Heart left ventricle (tissue), 16 donors: ENCODE measurements at regions of chr15 and their contacts with region 1.

Region 1: DNA sequence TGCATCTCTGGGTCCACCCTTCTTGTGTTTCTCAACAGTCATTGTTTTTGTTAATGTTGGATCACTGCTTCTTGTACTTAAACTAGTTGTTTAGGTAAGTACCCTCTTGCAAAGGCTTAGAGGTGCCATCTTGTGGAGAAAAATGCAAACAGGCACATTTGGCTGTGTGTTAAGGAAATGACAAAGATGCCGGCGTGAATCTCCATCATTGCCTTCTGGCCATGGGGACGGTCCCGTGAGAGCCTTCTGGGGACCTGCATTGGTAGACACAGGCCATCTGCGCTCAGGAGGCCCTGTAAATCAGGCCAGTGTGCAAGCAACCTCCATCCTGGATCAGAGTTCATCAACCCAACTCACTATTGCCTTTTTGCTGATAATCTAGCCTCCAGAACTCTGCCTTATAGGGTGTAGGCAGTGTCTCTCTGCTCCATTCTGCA is 158.6 kb upstream of the NR2E3 start:
- DNase-seq: no peak
- ATAC-seq: peak in 1 of 4 donors; percentile 47
- H3K4me3 ChIP-seq: no peak overlapping the region
- H3K27ac ChIP-seq: peak overlapping the region in 1 of 12 donors; percentile 10
- H3K4me1 ChIP-seq: peaks cover 0 to 47% (median 13%) of the 10 kb centered on the region in 12 donors
- H3K27me3 ChIP-seq: no peaks in the 10 kb centered on the region
- CTCF ChIP-seq: peak in 10 of 12 donors; percentile 24 to 54 (median 41)
- POLR2A ChIP-seq: no peak

Region 2: DNA sequence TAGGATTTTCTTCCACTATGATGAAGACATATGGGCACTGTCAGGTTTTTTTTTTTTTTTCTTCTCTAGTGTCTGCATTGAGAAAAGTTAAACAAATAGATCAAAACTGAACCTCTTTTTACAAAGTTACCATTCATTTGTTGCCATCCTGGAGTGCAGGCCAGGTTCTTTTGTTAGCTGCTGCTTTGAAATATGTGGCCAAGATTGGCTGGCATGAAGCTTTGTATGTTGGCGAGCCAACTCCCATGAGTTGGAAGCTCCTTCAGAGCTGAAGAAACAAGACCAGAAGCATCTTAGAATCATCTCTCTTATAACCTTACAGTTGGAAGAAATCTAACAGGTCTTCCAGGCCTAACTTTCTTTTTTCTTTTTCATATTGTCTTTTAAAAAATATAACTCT is 190.0 kb before region 1 on chr15:
- intact Hi-C with region 1: loop called in 2 of 10 experiments (anchors 5 to 10 kb)
- DNase-seq: no peak
- ATAC-seq: no peak
- H3K4me3 ChIP-seq: no peak overlapping the region
- H3K27ac ChIP-seq: no peak overlapping the region
- H3K4me1 ChIP-seq: peaks cover 0 to 43% (median 20%) of the 10 kb centered on the region in 12 donors
- H3K27me3 ChIP-seq: no peaks in the 10 kb centered on the region
- CTCF ChIP-seq: no peak
- POLR2A ChIP-seq: no peak

Region 3: GRCh38 chr15:71575474-71576045 is 76.2 kb before region 1 on chr15:
- intact Hi-C with region 1: loop called in 1 of 10 experiments (anchors 5 kb)
- DNase-seq: no peak
- ATAC-seq: no peak
- H3K4me3 ChIP-seq: no peak overlapping the region
- H3K27ac ChIP-seq: no peak overlapping the region
- H3K4me1 ChIP-seq: peaks cover 0 to 19% (median 0%) of the 10 kb centered on the region in 12 donors
- H3K27me3 ChIP-seq: no peaks in the 10 kb centered on the region
- CTCF ChIP-seq: peak; percentile 28 to 60 (median 47)
- POLR2A ChIP-seq: no peak

Region 4: GRCh38 chr15:71707230-71708050 is 55.7 kb after region 1 on chr15:
- intact Hi-C with region 1: loop called in 2 of 10 experiments (anchors 5 kb)
- DNase-seq: no peak
- ATAC-seq: peak; percentile 29 to 56 (median 46)
- H3K4me3 ChIP-seq: no peak overlapping the region
- H3K27ac ChIP-seq: peak overlapping the region; percentile 19 to 78 (median 60)
- H3K4me1 ChIP-seq: peaks cover 6 to 67% (median 40%) of the 10 kb centered on the region in 12 donors
- H3K27me3 ChIP-seq: no peaks in the 10 kb centered on the region
- CTCF ChIP-seq: no peak
- POLR2A ChIP-seq: no peak

Region 5: GRCh38 chr15:71730277-71731144 is 78.7 kb after region 1 on chr15:
- intact Hi-C with region 1: loop called in 1 of 10 experiments (anchors 5 kb)
- DNase-seq: peak in 3 of 5 donors; percentile 48 to 58 (median 51)
- ATAC-seq: peak; percentile 75 to 82 (median 80)
- H3K4me3 ChIP-seq: no peak overlapping the region
- H3K27ac ChIP-seq: peak overlapping the region in 6 of 12 donors; percentile 0 to 54 (median 19)
- H3K4me1 ChIP-seq: peaks cover 0 to 29% (median 8%) of the 10 kb centered on the region in 12 donors
- H3K27me3 ChIP-seq: no peaks in the 10 kb centered on the region
- CTCF ChIP-seq: peak; percentile 65 to 86 (median 79)
- POLR2A ChIP-seq: no peak